CD14-positive monocyte (primary cell): ENCODE measurements at regions of chr12 and their contacts with region 1.

Region 1: GRCh38 chr12:49609746-49610089 is 4.3 kb upstream of the FAM186B start:
- DNase-seq: no peak
- H3K4me3 ChIP-seq: no peak overlapping the region
- H3K4me3 Mint-ChIP-seq: no peak overlapping the region
- H3K27ac ChIP-seq: no peak overlapping the region
- H3K27ac Mint-ChIP-seq: no peak overlapping the region
- H3K4me1 ChIP-seq: no peaks in the 10 kb centered on the region
- H3K4me1 Mint-ChIP-seq: peaks cover 7% of the 10 kb centered on the region
- H3K27me3 ChIP-seq: no peaks in the 10 kb centered on the region
- H3K27me3 Mint-ChIP-seq: peaks cover 2 to 23% (median 11%) of the 10 kb centered on the region in 3 donors
- CTCF ChIP-seq: no peak

Region 2: GRCh38 chr12:49636979-49637755 is 27.4 kb after region 1 on chr12:
- intact Hi-C with region 1: loop called in 1 of 2 experiments (anchors 2 kb)
- DNase-seq: peak; percentile 18 to 49 (median 44)
- H3K4me3 ChIP-seq: no peak overlapping the region
- H3K4me3 Mint-ChIP-seq: no peak overlapping the region
- H3K27ac ChIP-seq: no peak overlapping the region
- H3K27ac Mint-ChIP-seq: peak overlapping the region in 1 of 7 donors; percentile 43
- H3K4me1 ChIP-seq: no peaks in the 10 kb centered on the region
- H3K4me1 Mint-ChIP-seq: peaks cover 7% of the 10 kb centered on the region
- H3K27me3 ChIP-seq: no peaks in the 10 kb centered on the region
- H3K27me3 Mint-ChIP-seq: peaks cover 2 to 3% (median 3%) of the 10 kb centered on the region in 3 donors
- CTCF ChIP-seq: peak; percentile 66